Mucosa of descending colon (tissue), 3 donors: ENCODE measurements at regions of chr10 and their contacts with region 1.

Region 1: DNA sequence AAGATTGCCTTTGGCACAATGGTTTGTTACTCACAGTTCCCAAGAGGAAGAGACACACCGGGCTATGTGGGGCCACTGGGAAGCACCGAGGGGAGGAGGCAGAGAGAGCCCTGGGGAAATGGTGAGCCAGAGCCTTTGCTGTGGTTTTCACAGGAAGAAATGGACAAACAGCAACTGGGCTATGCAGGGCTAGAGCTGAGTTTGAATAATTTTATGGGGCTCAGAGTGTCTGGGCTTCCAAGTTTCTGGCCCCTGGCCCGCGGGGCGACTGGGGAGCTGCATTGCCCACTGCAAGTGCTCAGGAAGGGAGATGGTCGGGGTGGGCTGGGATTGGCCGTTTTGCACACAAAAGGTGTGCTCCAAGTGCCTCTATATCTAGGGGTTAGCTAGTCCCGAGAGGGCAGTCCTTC is 92.6 kb downstream of the CHST15 start:
- DNase-seq: peak in 1 of 3 donors; percentile 42
- ATAC-seq: no peak
- H3K4me3 ChIP-seq: no peak overlapping the region
- H3K4me1 ChIP-seq: no peaks in the 10 kb centered on the region
- CTCF ChIP-seq: no peak

Region 2: DNA sequence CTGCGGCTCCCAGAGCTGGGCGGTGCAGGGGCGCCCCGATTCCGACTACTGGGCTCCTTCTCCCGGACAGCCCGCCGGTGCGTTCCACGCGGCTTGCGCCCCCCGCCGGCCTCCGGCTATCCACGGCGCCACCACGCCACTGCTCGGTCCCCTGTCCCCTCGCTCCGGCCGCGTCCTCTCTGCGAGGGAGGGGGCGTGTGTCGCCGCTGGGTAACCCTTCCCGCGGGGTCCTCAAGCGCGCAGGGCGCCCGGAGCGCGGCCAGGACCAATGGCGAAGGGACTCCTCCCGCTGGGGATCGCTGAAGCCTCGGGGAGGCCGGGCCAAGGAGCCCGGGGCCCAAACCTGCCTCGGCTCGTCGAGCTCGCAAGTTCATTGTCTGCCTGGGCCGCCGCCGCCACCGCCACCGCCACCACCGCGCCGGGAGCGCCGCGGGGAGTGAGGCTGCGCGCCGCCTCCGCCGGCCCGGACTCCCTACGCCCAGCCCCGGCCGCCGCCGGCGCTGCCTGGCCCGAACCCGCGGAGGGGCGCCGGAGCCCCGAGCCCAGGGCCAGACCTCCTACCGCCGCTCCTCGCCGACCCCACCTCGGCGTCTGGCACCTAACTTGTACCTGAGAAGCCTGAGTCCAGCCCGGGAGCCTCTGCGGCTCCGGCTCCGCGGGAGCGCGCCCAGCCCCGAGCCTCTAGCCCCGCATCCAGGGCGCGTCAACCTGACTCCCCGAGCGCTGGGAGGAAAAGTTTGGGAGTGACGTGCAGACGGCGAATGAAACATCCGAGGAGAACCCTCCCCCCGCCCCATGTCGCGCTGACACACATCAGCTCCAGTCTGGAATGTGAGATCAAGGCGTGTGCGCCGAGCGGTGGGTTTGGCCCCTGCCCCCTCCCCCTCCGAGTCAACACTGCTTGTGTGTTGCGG is 92.3 kb after region 1 on chr10 and contains the start of gene CHST15:
- intact Hi-C with region 1: loop called in 1 of 2 experiments (anchors 10 kb)
- DNase-seq: peak; percentile 28 to 62 (median 56)
- ATAC-seq: peak; percentile 36
- H3K4me3 ChIP-seq: peak within 1 kb of the TSS; percentile 14
- H3K4me1 ChIP-seq: peaks cover 20% of the 10 kb centered on the region
- CTCF ChIP-seq: no peak
- total RNA-seq, gene CHST15: 4.8 to 64.5 (median 10.8) TPM